ENCODE measurements at regions of chrX and their contacts with region 1.

Region 1: GRCh38 chrX:41785685-41786084 is 61.7 kb downstream of the GPR82 start:
- DNase-seq: no peak
- H3K4me3 ChIP-seq: no peak overlapping the region
- H3K27ac ChIP-seq: no peak overlapping the region
- H3K4me1 ChIP-seq: no peaks in the 10 kb centered on the region
- H3K27me3 ChIP-seq: no peaks in the 10 kb centered on the region
- CTCF ChIP-seq: no peak
- EP300 ChIP-seq: no peak
- POLR2A ChIP-seq: no peak

Region 2: DNA sequence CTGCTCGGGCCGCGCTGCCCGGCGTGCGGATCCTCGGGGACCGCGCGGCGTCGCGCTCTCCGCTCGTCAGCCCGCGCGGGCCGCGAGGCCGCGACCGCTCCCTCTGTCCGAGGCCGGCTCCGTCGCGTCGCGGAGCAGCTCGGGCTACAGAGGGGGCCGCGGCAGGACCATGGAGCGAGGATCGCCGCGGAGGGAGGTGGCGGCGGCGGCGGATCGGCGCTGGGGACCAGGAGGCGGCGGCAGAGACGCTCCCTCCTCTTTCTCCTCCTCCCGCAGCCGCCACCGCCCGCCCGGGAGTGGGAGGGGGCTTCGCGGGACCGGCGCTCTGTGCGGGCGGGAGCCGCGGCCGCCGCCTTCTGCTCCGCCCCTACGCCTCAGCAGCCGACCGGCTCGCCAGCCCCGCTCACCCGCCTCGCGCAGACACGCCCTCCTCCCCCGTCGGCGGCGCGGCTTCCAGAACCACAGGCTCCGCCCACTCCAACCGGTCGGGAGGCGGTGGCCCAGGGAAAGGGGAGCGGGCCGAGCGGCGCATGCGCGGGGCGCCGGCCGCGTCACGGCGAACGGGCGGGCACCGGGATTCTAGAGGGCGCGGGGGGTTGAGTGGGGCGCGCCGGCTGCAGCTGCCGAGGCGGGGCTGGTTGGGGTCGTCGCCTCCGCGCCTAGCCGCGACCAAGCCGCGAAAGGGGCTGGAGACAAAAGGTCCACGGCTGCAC is 137.7 kb after region 1 on chrX and contains the start of gene CASK:
- intact Hi-C with region 1: loop called (anchors 5 kb)
- DNase-seq: peak; percentile 96
- H3K4me3 ChIP-seq: peak within 1 kb of the TSS; percentile 43 to 66 (median 60)
- H3K27ac ChIP-seq: peak within 1 kb of the TSS; percentile 85 to 89 (median 86)
- H3K4me1 ChIP-seq: peaks cover 0 to 6% (median 0%) of the 10 kb centered on the region in 4 donors
- H3K27me3 ChIP-seq: no peaks in the 10 kb centered on the region
- CTCF ChIP-seq: no peak
- EP300 ChIP-seq: no peak
- POLR2A ChIP-seq: no peak
- total RNA-seq, gene CASK: 18.4 to 37.1 (median 25.3) TPM

Measured in sigmoid colon (tissue), 7 donors.